Activated CD8-positive, alpha-beta memory T cell treated with anti-CD3 and anti-CD28 coated beads, Interleukin-2, amount 10 ng/mL, durations not matched to agents 7 days and 5 days (primary cell): ENCODE measurements at regions of chr1 and their contacts with region 1.

Region 1: DNA sequence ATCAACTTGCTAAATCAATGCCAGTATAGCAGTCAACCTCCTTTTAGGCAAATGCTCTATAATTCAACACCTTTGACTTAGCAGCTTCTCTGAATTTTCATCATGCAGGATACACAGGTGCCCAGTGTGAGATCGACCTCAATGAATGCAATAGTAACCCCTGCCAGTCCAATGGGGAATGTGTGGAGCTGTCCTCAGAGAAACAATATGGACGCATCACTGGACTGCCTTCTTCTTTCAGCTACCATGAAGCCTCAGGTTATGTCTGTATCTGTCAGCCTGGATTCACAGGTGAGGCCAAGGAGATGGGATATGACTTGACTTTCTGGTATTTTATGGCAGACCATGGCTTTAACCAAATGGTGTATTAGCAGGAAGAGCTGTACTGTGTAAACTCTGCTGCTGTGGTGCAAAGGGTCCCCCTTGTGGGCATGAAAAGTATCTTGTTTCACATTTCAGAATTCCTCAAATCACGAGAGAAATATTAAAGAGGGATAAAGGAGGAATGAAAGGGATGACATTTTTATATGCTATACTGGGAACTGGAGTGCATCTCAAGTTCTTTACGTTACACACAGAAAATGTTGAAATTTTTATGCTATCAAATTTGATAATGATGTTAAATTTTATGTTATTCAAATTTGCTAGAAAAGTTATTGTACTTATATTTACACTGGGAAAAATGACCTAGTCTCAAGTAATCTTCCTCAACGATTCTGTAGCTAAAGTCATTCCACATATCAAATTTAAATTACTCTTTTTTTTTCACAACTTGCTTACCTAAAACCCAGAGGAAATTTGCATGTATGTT is 88.9 kb downstream of the CRB1 start:
- DNase-seq: peak; percentile 45
- ATAC-seq: peak; percentile 78
- H3K4me3 Mint-ChIP-seq: no peak overlapping the region
- H3K27ac Mint-ChIP-seq: no peak overlapping the region
- H3K4me1 Mint-ChIP-seq: peaks cover 3% of the 10 kb centered on the region
- H3K27me3 Mint-ChIP-seq: no peaks in the 10 kb centered on the region

Region 2: GRCh38 chr1:197180252-197180878 is 176.6 kb before region 1 on chr1:
- CTCF ChIA-PET with region 1: interaction called, 25 read pairs
- DNase-seq: no peak
- ATAC-seq: no peak
- H3K4me3 Mint-ChIP-seq: no peak overlapping the region
- H3K27ac Mint-ChIP-seq: no peak overlapping the region
- H3K4me1 Mint-ChIP-seq: peaks cover 4% of the 10 kb centered on the region
- H3K27me3 Mint-ChIP-seq: no peaks in the 10 kb centered on the region

Region 3: DNA sequence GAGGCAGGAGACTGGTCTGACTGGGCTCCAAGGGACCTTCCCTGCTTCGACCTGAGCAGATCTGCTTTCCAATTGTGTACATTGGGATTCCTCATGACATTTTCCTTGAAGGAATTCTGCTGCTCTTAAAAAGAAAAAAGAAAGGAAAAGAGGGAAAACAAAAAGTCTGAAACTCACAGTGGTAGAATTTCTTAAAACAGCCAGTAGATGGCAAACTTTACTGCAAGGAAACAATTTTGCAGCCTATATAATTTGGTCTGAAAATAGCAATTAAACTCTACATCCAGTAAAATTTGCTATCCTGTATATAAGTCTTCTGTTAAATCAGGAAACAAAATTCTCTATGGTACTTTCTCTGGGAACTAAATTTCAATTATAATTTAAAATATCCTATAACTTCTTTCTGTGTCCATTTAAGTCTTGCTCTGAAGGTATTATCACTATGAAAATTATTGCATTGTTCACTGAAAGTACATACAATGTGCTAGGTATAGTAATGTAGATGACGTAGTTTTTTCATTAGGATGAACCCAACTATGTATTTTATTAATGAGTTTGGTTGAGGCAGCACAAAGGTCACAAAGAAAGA is 29.1 kb before region 1 on chr1:
- CTCF ChIA-PET with region 1: interaction called, 17 read pairs
- DNase-seq: no peak
- ATAC-seq: no peak
- H3K4me3 Mint-ChIP-seq: no peak overlapping the region
- H3K27ac Mint-ChIP-seq: no peak overlapping the region
- H3K4me1 Mint-ChIP-seq: no peaks in the 10 kb centered on the region
- H3K27me3 Mint-ChIP-seq: peaks cover 9% of the 10 kb centered on the region